ENCODE measurements at regions of chr19 and their contacts with region 1.

Region 1: DNA sequence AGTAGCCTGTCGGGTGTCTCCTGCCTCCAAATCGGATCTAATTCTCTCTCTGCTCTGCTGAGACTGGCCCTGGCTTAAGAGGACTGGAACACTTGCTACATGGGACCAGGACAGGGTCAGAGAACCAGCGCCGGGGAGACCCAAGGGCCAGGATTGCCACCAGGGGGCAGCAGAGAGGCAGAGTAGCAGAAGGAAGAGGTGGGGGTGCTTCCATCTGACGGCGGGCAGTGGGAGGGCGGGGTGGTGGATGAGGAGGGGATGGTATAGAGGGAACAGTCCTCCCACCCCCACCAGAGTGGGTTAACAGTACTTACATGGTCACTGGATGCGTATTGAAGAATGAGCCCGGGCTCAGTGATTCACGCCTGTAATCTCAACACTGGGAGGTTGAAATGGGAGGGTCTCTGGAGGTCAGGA is 11.9 kb downstream of the SELENOW start:
- DNase-seq: peak; percentile 26
- H3K4me3 ChIP-seq: no peak overlapping the region
- H3K27ac ChIP-seq: no peak overlapping the region
- H3K4me1 ChIP-seq: peaks cover 7% of the 10 kb centered on the region
- H3K27me3 ChIP-seq: no peaks in the 10 kb centered on the region
- CTCF ChIP-seq: peak; percentile 82 to 83

Region 2: DNA sequence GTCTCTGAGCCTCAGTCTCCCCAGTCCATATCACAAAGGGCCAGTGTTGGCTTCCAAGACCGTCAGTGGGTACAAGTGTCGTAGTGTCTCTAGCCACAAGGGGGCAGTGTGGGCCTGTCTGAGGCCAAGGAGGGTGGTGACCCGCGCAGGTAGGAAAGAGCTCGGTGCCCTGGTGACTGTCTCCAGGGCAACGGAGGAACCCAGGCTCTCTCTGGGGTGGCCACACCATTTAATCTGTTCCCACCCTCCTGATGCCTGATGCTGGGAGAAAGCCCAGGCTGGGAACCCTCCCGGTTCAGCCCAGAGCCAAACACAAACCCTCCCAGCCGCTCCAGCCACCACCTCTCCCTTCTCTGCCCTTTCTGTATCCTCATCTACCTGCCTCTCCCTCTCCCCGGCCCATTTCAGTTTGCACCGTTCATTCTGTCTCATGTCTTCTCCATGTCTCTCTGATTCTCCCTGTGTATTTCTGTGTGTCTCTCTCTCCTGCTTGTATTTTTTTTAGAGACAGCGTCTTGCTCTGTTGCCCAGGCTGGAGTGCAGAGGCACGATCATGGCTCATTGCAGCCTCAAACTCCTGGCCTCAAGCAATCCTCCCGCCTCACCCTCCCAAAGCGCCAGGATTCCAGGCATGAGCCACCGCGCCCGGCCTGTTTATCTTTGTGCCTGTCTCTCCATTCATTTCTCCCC is 353.5 kb before region 1 on chr19:
- CTCF ChIA-PET with region 1: no interaction called
- dilution Hi-C with region 1: no loop called
- in situ Hi-C with region 1: no loop called
- intact Hi-C with region 1: loop called (anchors 2 kb)
- DNase-seq: peak; percentile 55
- H3K4me3 ChIP-seq: no peak overlapping the region
- H3K27ac ChIP-seq: no peak overlapping the region
- H3K4me1 ChIP-seq: no peaks in the 10 kb centered on the region
- H3K27me3 ChIP-seq: no peaks in the 10 kb centered on the region
- CTCF ChIP-seq: peak; percentile 70 to 93

Region 3: DNA sequence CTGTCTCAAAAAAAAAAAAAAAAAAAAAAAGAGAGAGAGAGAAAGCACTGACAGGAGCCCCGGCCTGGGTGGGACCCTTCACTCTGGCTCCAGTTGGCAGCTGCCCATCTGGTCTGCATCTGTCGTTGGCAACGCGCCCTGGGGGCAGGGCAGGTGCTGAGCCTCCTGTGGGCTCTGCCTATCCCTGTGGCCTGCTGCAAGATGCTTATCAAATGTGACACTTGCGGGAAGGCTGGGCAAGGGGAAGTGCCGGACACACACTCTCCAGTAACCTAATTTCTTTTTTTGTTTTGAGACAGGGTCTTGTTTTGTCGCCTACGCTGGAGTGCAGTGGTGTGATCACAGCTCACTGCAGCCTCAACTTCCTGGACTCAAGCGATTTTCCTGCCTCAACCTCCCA is 295.7 kb before region 1 on chr19:
- CTCF ChIA-PET with region 1: no interaction called
- dilution Hi-C with region 1: loop called (anchors 10 kb)
- in situ Hi-C with region 1: no loop called
- intact Hi-C with region 1: no loop called
- DNase-seq: no peak
- H3K4me3 ChIP-seq: no peak overlapping the region
- H3K27ac ChIP-seq: no peak overlapping the region
- H3K4me1 ChIP-seq: no peaks in the 10 kb centered on the region
- H3K27me3 ChIP-seq: no peaks in the 10 kb centered on the region
- CTCF ChIP-seq: no peak

Region 4: GRCh38 chr19:47701348-47702192 is 88.8 kb before region 1 on chr19:
- CTCF ChIA-PET with region 1: no interaction called
- dilution Hi-C with region 1: no loop called
- in situ Hi-C with region 1: no loop called
- intact Hi-C with region 1: no loop called
- DNase-seq: no peak
- H3K4me3 ChIP-seq: no peak overlapping the region
- H3K27ac ChIP-seq: no peak overlapping the region
- H3K4me1 ChIP-seq: no peaks in the 10 kb centered on the region
- H3K27me3 ChIP-seq: no peaks in the 10 kb centered on the region
- CTCF ChIP-seq: no peak

Region 5: DNA sequence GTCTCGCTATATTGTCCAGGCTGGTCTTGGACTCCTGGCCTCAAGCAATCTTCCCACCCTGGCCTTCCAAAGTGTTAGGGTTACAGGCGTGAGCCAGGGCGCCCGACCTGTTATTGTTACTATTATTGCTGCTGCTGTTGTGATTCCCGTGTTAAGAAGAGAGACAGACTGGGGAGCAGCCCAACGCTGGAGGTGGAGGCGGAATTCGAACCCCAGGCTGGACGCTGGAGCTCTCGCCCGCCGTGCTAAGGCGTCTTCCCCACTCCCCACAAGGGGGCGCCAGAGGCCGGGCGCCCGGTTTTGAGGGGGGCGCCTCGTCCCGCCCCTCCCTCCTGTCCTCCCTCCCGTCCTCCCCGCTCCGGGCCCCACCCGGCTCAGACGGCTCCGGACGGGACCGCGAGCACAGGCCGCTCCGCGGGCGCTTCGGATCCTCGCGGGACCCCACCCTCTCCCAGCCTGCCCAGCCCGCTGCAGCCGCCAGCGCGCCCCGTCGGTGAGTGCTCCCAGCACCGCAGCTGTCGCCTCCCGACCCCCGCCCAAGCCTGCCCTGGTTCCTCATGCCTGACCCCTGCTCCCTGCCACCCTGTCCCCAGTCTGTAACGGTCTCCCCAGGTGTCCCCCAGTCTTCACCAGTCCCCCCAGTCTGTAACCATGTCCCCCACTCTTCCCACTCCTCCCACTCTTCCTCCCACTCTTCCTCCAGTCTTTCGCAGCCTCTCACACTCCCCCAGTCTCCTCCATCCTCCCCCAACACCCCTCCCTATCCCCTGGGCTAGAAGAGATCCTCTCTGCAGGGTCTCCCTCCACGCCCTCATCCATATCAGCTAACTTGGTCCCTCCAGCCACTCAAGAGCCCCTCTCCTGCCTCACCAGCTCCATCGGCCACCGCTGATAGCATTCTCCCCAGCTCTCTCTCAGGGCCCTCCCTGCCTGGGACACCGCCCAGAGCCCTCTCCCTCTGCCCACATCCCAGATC is 77.1 kb before region 1 on chr19 and contains the start of gene EHD2:
- CTCF ChIA-PET with region 1: interaction called, 35 read pairs
- dilution Hi-C with region 1: no loop called
- in situ Hi-C with region 1: loop called in 1 of 2 experiments (anchors 5 kb)
- intact Hi-C with region 1: loop called (anchors 1 kb)
- DNase-seq: peak; percentile 68
- H3K4me3 ChIP-seq: peak within 1 kb of the TSS; percentile 84 to 97 (median 84)
- H3K27ac ChIP-seq: peak within 1 kb of the TSS; percentile 58
- H3K4me1 ChIP-seq: peaks cover 17% of the 10 kb centered on the region
- H3K27me3 ChIP-seq: no peaks in the 10 kb centered on the region
- CTCF ChIP-seq: peak; percentile 62 to 96
- total RNA-seq, gene EHD2: 111 to 178 TPM

Region 6: DNA sequence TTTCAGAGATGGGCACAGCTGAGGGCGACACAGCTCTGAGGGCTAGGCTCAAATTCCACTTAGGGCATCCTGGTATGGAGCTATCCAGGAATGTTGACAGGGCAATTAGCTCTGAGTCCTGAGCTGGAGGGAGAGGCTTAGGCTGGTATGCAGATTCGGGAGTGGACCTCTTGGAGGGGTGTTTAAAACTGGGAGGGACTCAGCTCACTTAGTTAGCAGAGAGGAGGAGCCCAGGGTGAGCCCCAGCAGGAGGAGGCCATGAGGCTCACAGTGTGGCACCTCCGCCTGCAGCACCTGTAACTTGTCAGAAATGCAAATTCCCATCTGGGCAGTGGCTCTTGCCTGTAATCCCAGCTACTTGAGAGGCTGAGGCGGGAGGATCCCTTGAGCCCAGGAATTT is 55.3 kb before region 1 on chr19:
- CTCF ChIA-PET with region 1: no interaction called
- dilution Hi-C with region 1: no loop called
- in situ Hi-C with region 1: no loop called
- intact Hi-C with region 1: no loop called
- DNase-seq: no peak
- H3K4me3 ChIP-seq: no peak overlapping the region
- H3K27ac ChIP-seq: no peak overlapping the region
- H3K4me1 ChIP-seq: peaks cover 4% of the 10 kb centered on the region
- H3K27me3 ChIP-seq: no peaks in the 10 kb centered on the region
- CTCF ChIP-seq: no peak

Region 7: DNA sequence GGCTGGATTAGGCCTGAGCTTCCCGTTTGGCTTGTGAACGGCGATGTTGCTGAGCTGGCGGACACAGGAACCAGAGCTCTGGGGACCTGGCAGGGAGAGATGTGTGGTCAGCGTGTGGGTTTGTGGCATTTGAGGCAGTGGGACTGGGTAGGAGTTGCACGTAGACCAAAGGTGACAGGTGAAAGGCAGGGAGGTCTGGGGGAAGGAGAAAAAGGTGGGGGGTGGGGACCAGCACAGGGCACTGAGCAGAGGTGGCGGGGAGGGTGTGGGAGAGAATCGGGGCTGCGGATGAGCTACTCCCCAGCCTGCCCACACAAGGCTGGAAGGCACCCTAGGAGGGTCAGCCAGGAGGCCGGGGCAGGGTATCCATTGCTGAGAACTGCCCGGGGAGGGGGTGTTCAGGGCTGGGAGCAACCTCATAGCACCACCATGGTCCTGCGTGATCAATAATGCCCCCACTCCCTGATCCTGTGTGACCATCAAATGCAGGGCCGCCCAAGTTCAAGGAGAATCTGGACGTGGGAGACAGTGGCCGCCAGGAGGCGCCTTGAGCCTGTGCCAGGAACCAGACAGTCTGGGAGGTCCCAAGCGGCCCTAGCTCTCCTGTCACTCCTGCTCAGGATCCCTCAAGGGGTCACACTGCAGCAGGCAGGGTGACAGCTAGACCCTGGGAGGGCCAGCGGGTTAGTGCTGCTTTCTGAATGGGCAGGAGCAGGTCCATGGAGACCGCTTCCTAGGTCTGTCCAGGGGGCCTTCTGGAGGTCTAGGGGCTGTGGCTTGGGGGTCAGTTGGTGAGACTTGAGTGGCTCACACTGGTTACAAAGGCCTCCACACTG is 24.7 kb before region 1 on chr19:
- CTCF ChIA-PET with region 1: no interaction called
- dilution Hi-C with region 1: no loop called
- in situ Hi-C with region 1: no loop called
- intact Hi-C with region 1: loop called (anchors 1 kb)
- DNase-seq: peak; percentile 39
- H3K4me3 ChIP-seq: no peak overlapping the region
- H3K27ac ChIP-seq: no peak overlapping the region
- H3K4me1 ChIP-seq: no peaks in the 10 kb centered on the region
- H3K27me3 ChIP-seq: no peaks in the 10 kb centered on the region
- CTCF ChIP-seq: peak; percentile 80 to 86

Region 8: DNA sequence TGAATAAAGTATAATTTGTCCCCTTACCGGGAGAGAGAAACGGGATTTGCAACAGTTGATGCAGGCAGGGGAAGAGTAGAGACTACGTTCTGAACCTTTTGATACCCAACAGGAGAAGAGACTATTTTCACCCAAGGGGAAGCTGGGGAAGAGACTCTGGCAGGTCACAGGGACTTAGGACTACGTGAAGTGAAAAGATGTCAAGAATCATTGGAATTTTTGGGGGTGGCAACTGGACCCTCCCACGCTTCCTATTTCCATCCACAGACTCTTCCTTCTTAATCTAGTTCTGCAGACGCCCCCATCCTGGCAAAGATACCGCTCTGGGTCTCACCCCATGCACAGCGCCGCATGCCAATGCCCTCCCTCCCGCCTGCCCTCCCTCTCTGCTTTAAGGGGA is 239.7 kb after region 1 on chr19:
- CTCF ChIA-PET with region 1: no interaction called
- dilution Hi-C with region 1: loop called (anchors 5 kb)
- in situ Hi-C with region 1: no loop called
- intact Hi-C with region 1: no loop called
- DNase-seq: no peak
- H3K4me3 ChIP-seq: no peak overlapping the region
- H3K27ac ChIP-seq: no peak overlapping the region
- H3K4me1 ChIP-seq: no peaks in the 10 kb centered on the region
- H3K27me3 ChIP-seq: no peaks in the 10 kb centered on the region
- CTCF ChIP-seq: no peak